ENCODE measurements at regions of chr21 and their contacts with region 1.

Region 1: DNA sequence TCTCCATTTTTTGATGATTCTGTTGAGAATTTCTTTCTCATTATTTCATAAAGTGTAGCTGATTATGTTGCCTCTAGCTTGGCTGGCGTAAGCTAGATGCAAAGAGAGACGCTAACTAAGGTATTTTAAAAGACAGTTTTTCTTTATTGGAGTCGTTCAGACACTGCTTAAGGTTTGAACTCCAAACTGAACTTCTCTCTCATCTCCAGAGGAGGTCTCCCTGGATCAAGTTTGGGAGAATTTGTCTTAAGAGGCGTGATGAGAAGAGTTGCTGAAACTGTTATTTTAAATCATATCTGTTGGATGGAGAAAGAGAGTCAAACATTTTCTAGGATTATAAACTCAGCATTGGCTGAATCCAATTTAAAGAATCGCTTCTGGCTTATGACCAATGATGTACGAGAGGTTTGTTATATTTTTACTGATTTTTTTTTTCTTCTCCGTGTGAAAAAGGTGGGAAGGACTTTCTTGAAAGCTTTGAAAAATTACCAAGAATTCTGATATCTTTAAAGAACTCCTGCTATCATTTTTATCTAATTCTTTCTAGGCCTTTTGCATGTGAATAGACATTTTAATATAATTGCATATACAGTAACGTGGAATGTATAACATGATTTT is 34.0 kb downstream of the MAP3K7CL start:
- DNase-seq: peak; percentile 91
- ATAC-seq: peak; percentile 79
- H3K4me3 ChIP-seq: no peak overlapping the region
- H3K27ac ChIP-seq: no peak overlapping the region
- H3K4me1 ChIP-seq: peaks cover 5% of the 10 kb centered on the region; the same call in 1 of the 2 replicates
- H3K27me3 ChIP-seq: no peaks in the 10 kb centered on the region
- CTCF ChIP-seq: peak; percentile 90
- POLR2A ChIP-seq: 0 out of 2 replicates have a peak, but pooled peaks have one; percentile 34
- RAD21 ChIP-seq: peak; percentile 97

Region 2: DNA sequence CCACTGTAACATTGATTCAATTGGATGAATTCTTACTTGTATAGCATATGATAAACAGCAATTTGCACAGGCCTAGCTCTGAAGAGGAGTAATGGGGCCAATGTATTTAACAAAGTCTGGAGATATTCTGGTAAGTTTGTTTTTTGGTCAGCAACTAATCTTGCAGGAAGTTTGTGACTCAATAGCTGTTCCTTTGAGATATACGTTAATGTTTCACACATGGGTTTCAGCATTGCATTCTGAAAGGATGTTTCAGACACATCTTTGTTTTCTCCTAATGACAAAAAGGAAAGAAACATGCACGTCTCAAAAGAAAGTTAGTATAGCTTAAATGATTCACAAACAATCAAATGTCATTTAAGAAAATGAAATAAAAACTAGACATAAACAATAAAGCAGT is 220.8 kb before region 1 on chr21:
- CTCF ChIA-PET with region 1: no interaction called
- POLR2A ChIA-PET with region 1: no interaction called
- dilution Hi-C with region 1: no loop called
- in situ Hi-C with region 1: no loop called
- intact Hi-C with region 1: no loop called
- DNase-seq: peak; percentile 28
- ATAC-seq: no peak; the same call in 1 of the 2 replicates
- H3K4me3 ChIP-seq: no peak overlapping the region
- H3K27ac ChIP-seq: no peak overlapping the region
- H3K4me1 ChIP-seq: no peaks in the 10 kb centered on the region
- H3K27me3 ChIP-seq: no peaks in the 10 kb centered on the region
- CTCF ChIP-seq: no peak
- POLR2A ChIP-seq: no peak
- RAD21 ChIP-seq: no peak

Region 3: GRCh38 chr21:29073222-29074006 is 91.0 kb before region 1 on chr21 and contains the start of gene CCT8:
- CTCF ChIA-PET with region 1: no interaction called
- POLR2A ChIA-PET with region 1: no interaction called
- dilution Hi-C with region 1: no loop called
- in situ Hi-C with region 1: no loop called
- intact Hi-C with region 1: no loop called
- DNase-seq: peak; percentile 100
- ATAC-seq: peak; percentile 92
- H3K4me3 ChIP-seq: peak within 1 kb of the TSS; percentile 74
- H3K27ac ChIP-seq: peak within 1 kb of the TSS; percentile 86
- H3K4me1 ChIP-seq: peaks cover 9% of the 10 kb centered on the region
- H3K27me3 ChIP-seq: no peaks in the 10 kb centered on the region
- CTCF ChIP-seq: no peak
- POLR2A ChIP-seq: peak; percentile 96
- RAD21 ChIP-seq: no peak
- total RNA-seq, gene CCT8: 192 and 286 TPM in 2 replicates

Region 4: GRCh38 chr21:29130270-29130969 is 34.0 kb before region 1 on chr21 and contains the start of gene MAP3K7CL:
- CTCF ChIA-PET with region 1: no interaction called
- POLR2A ChIA-PET with region 1: no interaction called
- dilution Hi-C with region 1: no loop called
- in situ Hi-C with region 1: no loop called
- intact Hi-C with region 1: loop called (anchors 2 kb)
- DNase-seq: peak; percentile 100
- ATAC-seq: peak; percentile 99
- H3K4me3 ChIP-seq: no peak within 1 kb of the TSS
- H3K27ac ChIP-seq: peak within 1 kb of the TSS; percentile 78
- H3K4me1 ChIP-seq: peaks cover 9% of the 10 kb centered on the region
- H3K27me3 ChIP-seq: no peaks in the 10 kb centered on the region
- CTCF ChIP-seq: no peak
- POLR2A ChIP-seq: no peak; the same call in 1 of the 2 replicates
- RAD21 ChIP-seq: no peak; the same call in 1 of the 2 replicates
- total RNA-seq, gene MAP3K7CL: 21.0 and 25.3 TPM in 2 replicates